ENCODE measurements at regions of chr2 and their contacts with region 1.

Region 1: GRCh38 chr2:136362676-136363390 is 244.9 kb upstream of the CXCR4 start:
- DNase-seq: peak; percentile 75
- H3K4me3 Mint-ChIP-seq: peak overlapping the region; percentile 34
- H3K27ac Mint-ChIP-seq: peak overlapping the region; percentile 57
- H3K4me1 Mint-ChIP-seq: peaks cover 40% of the 10 kb centered on the region
- H3K27me3 Mint-ChIP-seq: no peaks in the 10 kb centered on the region

Region 2: DNA sequence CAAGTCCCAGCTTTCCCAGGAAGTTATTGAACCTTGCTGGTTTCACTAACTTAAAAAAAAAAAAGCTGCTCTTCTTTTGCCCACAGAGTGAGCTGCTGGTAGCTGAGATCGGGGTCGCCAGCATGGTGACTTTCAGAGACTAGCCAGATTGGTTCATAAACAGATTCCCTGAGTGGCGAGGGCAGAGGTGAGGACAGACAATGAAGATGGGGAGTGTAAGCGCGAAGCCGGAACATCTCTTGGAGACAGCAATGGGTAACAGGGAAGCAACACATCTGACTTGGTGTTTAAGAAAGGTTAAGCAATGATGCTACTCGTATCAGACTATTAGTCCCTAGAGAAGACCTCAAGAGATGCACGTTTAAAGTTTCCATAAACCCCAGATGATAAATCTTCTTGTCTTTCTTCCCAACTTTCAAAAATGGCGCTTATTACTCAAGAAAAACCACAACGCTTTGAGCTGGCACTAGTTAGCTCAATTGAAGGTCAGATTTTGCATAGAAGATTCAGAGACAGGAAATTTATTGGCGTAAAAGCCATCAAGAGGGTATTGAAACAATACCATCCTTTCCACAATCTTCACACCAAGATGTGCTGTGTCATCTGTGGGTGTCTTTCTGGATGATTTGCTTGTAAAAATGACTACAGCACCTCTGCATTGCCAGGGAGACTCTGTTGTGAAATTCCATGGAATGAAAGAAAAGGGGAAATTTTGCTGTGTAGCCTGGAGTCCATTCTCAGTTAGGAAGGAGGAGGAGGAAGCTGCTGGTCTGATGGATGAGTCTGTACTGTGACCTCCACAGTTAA is 51.8 kb before region 1 on chr2:
- intact Hi-C with region 1: loop called (anchors 1 kb)
- DNase-seq: no peak
- H3K4me3 Mint-ChIP-seq: peak overlapping the region; percentile 30
- H3K27ac Mint-ChIP-seq: peak overlapping the region; percentile 86
- H3K4me1 Mint-ChIP-seq: peaks cover 22% of the 10 kb centered on the region
- H3K27me3 Mint-ChIP-seq: no peaks in the 10 kb centered on the region